Calu3 (cell line): ENCODE measurements at regions of chr4 and their contacts with region 1.

Region 1: DNA sequence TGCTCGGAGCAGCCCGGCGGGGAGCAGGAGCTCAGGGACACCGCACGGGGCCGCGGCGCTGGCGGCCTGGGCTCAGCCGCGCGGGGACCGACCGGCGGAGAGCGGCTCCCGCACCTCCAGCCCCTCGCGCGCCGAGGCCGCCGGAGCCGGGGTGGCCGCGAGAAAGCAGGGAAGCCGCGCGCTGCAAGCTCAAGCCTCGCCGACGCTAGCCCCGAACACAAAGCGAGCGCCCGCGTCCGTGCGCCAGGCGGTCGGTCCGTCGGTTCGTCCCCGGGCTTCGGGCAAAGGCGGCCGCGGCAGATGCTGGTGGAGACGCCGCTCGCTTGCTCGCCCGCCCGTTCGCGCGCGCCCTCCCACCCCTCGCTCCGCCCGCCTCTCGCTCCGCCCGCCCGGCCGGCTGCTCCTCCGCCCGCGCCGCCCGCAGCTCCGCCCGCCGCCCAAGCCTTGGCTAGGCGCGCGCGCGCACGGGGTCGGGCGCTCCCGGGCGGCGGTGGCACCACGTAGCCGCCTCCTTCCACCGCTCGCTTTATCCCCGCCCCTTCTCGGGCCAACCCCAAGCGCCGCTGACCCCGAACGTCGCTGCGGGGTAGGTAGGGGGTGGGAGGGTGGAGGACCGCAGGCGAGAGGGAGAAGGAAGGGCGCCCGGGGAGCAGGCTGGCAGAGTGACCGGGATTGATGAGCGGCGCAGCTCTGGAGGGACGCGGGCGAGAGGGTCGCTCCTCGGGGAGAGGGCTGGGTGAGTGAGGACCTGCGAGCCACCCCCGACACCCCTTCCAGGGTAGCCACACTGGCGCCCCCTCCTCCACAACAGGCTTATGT is at the start of gene TSPAN5:
- DNase-seq: peak; percentile 74
- H3K4me3 Mint-ChIP-seq: peak within 1 kb of the TSS; percentile 86
- H3K27ac Mint-ChIP-seq: peak within 1 kb of the TSS; percentile 57
- H3K4me1 Mint-ChIP-seq: peaks cover 79% of the 10 kb centered on the region
- H3K27me3 Mint-ChIP-seq: peaks cover 10% of the 10 kb centered on the region
- CTCF ChIP-seq: no peak
- total RNA-seq, gene TSPAN5: 4.4 and 4.8 TPM in 2 replicates

Region 2: DNA sequence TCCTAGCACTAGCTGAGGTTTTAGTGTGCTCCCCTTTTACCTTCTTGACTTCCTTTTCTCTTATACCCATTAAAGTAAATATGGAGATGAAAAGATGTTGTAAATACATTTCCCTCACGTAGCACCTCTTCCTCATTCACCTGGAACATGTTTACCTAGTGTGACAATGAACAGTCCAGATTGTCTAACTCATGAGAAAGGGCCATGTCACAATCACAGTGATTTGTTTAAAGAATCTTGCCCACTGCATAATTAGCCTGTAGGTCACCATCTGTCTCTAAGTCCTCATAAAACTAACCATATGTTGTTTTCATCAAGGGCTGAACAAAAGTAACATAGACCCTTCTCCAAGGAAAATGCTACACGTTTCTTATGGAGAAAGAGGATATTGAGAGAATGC is 85.8 kb before region 1 on chr4:
- CTCF ChIA-PET with region 1: no interaction called
- intact Hi-C with region 1: loop called (anchors 5 kb)
- DNase-seq: no peak
- H3K4me3 Mint-ChIP-seq: no peak overlapping the region
- H3K27ac Mint-ChIP-seq: no peak overlapping the region
- H3K4me1 Mint-ChIP-seq: peaks cover 24% of the 10 kb centered on the region
- H3K27me3 Mint-ChIP-seq: no peaks in the 10 kb centered on the region
- CTCF ChIP-seq: no peak

Region 3: GRCh38 chr4:98745366-98745765 is 86.9 kb after region 1 on chr4:
- CTCF ChIA-PET with region 1: no interaction called
- intact Hi-C with region 1: no loop called
- DNase-seq: no peak
- H3K4me3 Mint-ChIP-seq: no peak overlapping the region
- H3K27ac Mint-ChIP-seq: no peak overlapping the region
- H3K4me1 Mint-ChIP-seq: no peaks in the 10 kb centered on the region
- H3K27me3 Mint-ChIP-seq: no peaks in the 10 kb centered on the region
- CTCF ChIP-seq: no peak

Region 4: DNA sequence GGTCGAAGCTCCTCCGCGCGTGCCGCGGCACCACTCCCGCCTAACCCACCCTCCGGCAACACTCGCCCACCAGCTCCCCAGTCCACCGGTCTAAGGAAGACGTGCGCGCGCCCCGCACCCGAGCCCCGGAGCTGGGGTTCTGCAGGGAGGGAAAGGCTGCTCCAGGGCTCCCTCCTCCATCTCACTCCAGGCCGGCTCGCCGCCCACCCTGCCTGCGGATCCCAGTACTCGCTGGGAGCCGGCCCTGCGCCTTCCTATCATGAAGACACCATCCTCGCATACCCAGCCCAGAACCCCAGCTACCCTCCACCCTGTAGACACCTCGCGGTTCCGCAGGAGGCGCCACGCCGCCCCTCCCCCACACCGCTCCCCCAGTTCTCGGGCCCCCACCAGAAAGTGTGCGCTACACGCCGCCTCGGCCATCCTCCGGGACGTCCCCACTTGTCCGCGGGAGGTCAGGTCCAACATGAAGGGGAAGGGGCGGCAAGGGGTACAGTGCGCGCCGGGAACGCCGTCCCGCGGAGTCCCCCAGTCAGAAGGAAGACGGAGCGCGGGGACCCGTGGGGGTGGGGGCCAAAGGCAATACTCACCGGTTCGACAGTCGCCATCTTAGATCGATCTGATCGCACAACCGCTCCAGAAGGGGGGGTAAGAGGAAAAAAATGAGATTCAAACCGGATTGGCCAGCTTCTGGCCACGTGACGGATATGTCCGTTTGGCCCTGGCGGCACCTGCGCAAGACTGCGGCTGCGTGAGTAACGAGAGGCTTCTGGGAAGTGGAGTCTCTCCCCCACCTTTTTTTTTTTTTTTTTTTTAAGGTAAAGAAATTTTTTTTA is 270.2 kb after region 1 on chr4 and contains the start of gene EIF4E:
- CTCF ChIA-PET with region 1: interaction called, 10 read pairs
- intact Hi-C with region 1: loop called (anchors 10 kb)
- DNase-seq: peak; percentile 92
- H3K4me3 Mint-ChIP-seq: peak within 1 kb of the TSS; percentile 98
- H3K27ac Mint-ChIP-seq: peak within 1 kb of the TSS; percentile 92
- H3K4me1 Mint-ChIP-seq: peaks cover 16% of the 10 kb centered on the region
- H3K27me3 Mint-ChIP-seq: no peaks in the 10 kb centered on the region
- CTCF ChIP-seq: no peak
- total RNA-seq, gene EIF4E: 103 and 105 TPM in 2 replicates